ENCODE measurements at regions of chr10 and their contacts with region 1.

Region 1: DNA sequence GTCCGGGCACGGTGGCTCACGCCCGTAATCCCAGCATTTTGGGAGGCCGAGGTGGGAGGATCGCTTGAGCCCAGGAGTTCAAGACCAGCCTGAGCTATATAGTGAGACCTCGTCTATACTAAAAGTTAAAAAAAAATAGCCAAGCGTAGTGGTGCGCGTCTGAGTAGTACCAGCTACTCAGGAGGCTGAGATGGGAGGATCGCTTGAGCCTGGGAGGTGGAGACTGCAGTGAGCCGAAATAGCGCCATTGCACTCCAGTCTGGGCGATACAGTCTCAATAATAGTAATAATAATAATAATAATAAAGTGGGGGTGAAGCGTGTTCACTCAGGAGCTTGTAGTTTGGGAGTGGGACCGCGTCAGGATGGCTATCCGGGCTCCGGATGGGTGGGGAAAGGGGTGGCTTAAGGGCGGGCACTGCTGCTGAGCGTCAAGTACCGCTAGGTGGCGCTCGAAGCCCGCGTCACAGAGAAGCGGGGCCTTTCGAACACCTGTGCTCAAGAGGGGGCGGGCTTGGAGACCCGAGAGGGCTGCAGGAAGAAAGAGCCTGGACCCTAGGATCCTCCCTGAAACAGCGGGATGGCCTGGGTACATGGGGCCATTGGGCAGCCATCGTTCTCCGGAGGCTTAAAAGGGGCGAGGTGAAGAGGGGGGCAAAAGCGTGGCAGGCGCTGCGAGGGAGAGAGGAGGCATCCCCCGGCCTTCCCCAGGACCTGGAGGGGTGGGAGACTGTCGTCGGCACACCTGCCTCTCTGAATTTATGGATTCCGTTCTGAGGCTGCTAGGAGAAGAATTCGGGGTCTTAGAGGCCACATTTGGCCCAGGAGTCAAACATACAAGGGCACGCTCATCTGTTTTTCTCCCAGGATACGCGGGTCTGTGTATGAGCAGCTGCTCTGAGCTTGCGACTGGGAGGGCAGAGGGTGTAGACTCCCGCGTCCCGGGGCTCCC is 14.5 kb downstream of the LBX1 start:
- DNase-seq: peak; percentile 89
- ATAC-seq: peak; percentile 84
- H3K4me3 Mint-ChIP-seq: peak overlapping the region; percentile 68
- H3K27ac Mint-ChIP-seq: no peak overlapping the region
- H3K4me1 Mint-ChIP-seq: peaks cover 28% of the 10 kb centered on the region
- H3K27me3 Mint-ChIP-seq: peaks cover 69% of the 10 kb centered on the region

Region 2: GRCh38 chr10:101130984-101131961 is 83.4 kb before region 1 on chr10 and contains the start of gene TLX1:
- CTCF ChIA-PET with region 1: interaction called, 6 read pairs
- POLR2A ChIA-PET with region 1: no interaction called
- intact Hi-C with region 1: loop called (anchors 2 kb)
- DNase-seq: peak; percentile 41
- ATAC-seq: no peak
- H3K4me3 Mint-ChIP-seq: peak within 1 kb of the TSS; percentile 21
- H3K27ac Mint-ChIP-seq: no peak within 1 kb of the TSS
- H3K4me1 Mint-ChIP-seq: peaks cover 24% of the 10 kb centered on the region
- H3K27me3 Mint-ChIP-seq: peaks cover 76% of the 10 kb centered on the region
- total RNA-seq, gene TLX1: not detected

Region 3: DNA sequence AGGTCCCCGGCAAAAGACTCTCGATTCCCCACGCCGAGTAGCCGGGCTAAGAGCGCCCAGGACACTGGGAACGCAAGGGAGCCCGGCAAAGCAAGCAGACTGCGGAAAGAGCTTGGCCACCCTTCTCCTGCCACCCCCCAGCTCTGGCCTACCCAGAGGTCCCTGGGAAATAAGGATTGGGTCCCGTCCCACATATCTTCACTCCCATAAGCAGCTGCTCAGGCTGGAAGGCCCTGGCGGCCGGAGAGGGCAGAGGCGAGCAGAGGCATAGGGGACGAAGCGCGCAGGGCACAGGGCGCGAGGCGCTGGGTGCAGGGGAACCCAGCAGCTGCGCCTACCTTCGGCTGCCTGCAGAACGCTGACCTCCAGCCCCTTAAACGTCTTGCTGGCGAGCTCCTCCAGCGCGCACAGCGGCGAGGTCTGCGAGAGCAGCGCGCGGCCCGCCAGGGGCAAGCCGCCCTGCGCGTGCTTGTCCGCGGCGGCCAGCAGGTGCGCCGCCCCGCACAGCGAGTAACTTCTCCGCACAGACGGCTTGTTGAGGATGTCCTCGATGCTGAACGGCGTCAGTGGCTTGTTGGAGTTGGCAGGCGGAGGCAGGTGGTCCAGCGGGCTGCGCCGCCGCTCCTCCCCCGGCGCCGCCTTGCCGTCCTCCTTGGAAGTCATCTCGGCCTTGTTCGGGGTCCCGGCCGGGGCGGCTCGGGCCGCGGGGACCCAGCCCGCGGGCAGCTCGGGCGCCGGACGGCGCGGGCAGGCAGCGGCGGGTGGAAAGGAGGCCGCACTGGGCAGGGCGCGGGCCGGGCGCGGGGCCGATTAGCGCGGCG is 13.6 kb after region 1 on chr10:
- CTCF ChIA-PET with region 1: interaction called, 27 read pairs
- POLR2A ChIA-PET with region 1: no interaction called
- intact Hi-C with region 1: loop called in 1 of 2 experiments (anchors 1 kb)
- DNase-seq: no peak
- ATAC-seq: no peak
- H3K4me3 Mint-ChIP-seq: no peak overlapping the region
- H3K27ac Mint-ChIP-seq: no peak overlapping the region
- H3K4me1 Mint-ChIP-seq: peaks cover 35% of the 10 kb centered on the region
- H3K27me3 Mint-ChIP-seq: peaks cover 70% of the 10 kb centered on the region

Region 4: DNA sequence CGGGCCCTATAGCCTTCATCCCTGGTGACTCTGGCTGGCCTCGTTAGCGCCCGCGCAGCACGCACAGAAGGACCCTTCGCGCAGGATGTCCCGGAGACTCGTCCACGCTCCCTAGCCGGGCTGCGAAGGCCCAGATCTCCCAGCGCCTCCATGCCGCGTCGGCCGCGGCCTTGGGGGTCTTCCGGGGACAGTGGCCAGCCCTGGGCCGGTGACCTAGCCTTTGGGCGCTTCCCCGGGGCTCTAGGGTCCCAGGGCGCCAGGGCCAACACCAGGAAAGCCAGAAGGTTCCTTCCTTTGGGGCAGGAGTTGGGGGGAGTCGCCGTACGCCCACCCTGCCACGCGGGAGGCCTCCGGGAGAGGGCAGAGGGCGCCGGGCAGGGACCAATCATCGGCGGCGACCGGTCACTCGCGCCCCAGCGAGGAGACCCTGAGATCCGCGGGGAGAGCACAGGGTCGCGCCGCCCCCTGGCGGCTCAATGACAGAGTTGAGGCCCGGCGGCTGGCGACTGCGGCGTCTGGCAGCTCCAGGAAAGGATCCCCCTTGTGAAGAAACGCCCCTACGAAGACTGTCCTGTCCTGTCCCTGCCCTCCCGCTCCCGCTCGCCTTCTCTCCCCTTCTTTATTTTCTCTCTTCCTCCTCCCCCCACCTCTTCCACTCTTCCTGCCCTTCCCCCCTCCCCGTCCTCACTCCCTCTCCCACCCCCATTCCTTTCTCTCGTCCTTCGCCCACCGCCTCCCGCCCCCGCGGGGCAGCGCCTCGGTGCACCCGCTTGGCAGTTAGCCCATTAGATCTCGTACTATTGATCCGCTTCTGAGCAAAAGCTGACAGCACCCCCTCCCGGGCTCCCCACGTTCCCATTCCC is 76.8 kb after region 1 on chr10:
- CTCF ChIA-PET with region 1: interaction called, 69 read pairs
- POLR2A ChIA-PET with region 1: no interaction called
- intact Hi-C with region 1: loop called (anchors 1 kb)
- DNase-seq: peak; percentile 73
- ATAC-seq: peak; percentile 69
- H3K4me3 Mint-ChIP-seq: peak overlapping the region; percentile 59
- H3K27ac Mint-ChIP-seq: no peak overlapping the region
- H3K4me1 Mint-ChIP-seq: peaks cover 3% of the 10 kb centered on the region
- H3K27me3 Mint-ChIP-seq: peaks cover 66% of the 10 kb centered on the region

Region 5: DNA sequence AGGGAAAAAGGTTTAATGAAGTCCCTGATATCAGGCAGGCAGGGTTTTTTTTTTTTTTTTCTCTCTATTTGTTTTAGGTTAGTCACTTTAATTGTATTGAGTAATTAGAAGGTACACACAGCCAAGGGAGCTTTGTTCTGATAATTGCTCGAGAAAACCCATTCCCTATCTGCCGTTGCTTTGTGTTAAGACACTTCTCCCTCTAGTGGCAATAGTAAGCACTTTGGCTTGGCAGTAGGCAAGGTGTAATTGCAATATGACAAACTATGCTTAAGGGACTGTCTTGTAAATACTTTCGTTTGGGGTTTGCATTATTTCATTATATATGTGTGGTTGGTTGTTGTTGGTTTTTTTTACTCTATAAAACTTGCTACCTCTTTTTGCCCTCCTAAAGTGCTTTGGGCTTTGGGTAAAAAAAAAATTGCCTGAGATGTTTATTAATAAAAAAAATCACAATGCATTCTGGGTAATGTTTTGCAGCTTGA is 252.6 kb after region 1 on chr10:
- CTCF ChIA-PET with region 1: interaction called, 8 read pairs
- POLR2A ChIA-PET with region 1: no interaction called
- intact Hi-C with region 1: loop called (anchors 1 kb)
- DNase-seq: peak; percentile 23
- ATAC-seq: peak; percentile 96
- H3K4me3 Mint-ChIP-seq: no peak overlapping the region
- H3K27ac Mint-ChIP-seq: no peak overlapping the region
- H3K4me1 Mint-ChIP-seq: peaks cover 9% of the 10 kb centered on the region
- H3K27me3 Mint-ChIP-seq: no peaks in the 10 kb centered on the region

Region 6: DNA sequence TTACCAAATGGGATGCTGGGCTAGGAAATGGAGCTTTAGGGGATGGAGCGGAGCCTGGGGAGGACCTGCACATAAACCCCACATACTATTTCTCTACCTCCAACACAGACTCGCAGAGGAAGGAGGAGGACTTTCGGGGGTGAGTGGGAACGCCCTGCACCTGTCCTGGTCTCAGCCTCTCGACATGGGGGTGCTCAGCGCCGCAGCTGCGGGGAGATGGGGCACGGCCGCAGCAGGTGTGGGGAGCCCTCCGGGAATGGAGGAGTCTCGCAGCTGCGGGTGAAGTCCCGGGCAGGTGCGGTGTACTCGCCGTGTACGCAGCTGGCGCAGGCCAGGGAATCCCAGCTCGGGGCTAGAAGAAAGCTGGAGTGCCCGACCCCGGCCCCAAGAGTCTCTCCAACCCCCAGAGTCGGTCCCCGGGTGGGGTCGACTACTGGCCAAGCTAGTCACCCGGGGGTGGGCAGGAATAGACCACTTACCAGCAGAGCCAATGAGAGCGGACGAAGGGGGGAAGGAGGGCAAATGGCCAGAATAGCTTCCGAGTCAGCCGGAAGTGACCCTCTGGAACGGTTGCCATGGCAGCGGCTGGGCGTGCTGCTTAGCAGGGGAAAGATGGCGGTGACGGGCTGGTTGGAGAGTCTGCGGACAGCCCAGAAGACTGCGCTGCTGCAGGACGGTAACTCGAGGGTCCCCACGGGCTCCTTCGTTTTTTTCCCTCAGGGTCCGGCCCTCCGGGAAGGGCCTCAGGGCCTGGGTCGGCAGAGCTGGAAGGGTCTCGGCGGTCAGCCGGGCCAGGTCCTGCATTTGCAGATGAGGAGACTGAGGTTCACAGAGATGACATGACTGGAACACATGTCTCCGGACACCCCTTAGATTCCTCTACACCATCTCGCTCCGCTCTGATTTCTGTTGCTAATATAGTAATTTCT is 373.3 kb after region 1 on chr10 and contains the starts of genes DPCD and POLL:
- CTCF ChIA-PET with region 1: interaction called, 5 read pairs
- POLR2A ChIA-PET with region 1: no interaction called
- intact Hi-C with region 1: loop called in 1 of 2 experiments (anchors 1 kb)
- DNase-seq: peak; percentile 97
- ATAC-seq: peak; percentile 98
- H3K4me3 Mint-ChIP-seq: peak within 1 kb of the TSS; percentile 86
- H3K27ac Mint-ChIP-seq: peak within 1 kb of the TSS; percentile 81
- H3K4me1 Mint-ChIP-seq: peaks cover 18% of the 10 kb centered on the region
- H3K27me3 Mint-ChIP-seq: no peaks in the 10 kb centered on the region
- total RNA-seq, gene DPCD: 15.5 to 19.3 TPM
- total RNA-seq, gene POLL: 30.2 to 31.4 TPM